ENCODE measurements at regions of chr1 and their contacts with region 1.

Region 1: GRCh38 chr1:147585640-147586383 is 44.5 kb downstream of the BCL9 start:
- DNase-seq: no peak
- ATAC-seq: no peak
- H3K4me3 ChIP-seq: no peak overlapping the region
- H3K27ac ChIP-seq: no peak overlapping the region
- H3K4me1 ChIP-seq: no peaks in the 10 kb centered on the region
- H3K27me3 ChIP-seq: no peaks in the 10 kb centered on the region
- CTCF ChIP-seq: no peak

Region 2: GRCh38 chr1:147551036-147551435 is 34.8 kb before region 1 on chr1:
- intact Hi-C with region 1: loop called in 1 of 3 experiments (anchors 5 kb)
- DNase-seq: no peak
- ATAC-seq: no peak
- H3K4me3 ChIP-seq: no peak overlapping the region
- H3K27ac ChIP-seq: no peak overlapping the region
- H3K4me1 ChIP-seq: peaks cover 0 to 10% (median 0%) of the 10 kb centered on the region in 3 donors
- H3K27me3 ChIP-seq: no peaks in the 10 kb centered on the region
- CTCF ChIP-seq: no peak

Region 3: DNA sequence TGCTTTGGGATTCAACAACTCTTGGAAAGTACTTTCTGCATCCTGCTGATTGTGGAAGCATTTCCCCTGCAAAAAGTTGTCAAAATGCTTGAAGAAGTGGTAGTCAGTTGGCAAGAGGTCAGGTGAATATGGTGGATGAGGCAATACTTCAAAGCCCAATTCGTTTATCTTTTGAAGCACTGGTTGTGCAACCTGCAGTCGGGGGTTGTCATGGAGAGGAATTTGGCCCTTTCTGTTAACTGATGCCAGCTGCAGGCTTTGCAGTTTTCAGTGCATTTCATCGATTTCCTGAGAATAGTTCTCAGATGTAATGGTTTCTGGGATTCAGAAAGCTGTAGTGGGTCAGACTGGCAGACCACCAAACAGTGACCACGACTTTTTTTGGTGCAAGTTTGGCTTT is 222.2 kb after region 1 on chr1:
- intact Hi-C with region 1: no loop called
- DNase-seq: no peak
- ATAC-seq: no peak
- H3K4me3 ChIP-seq: no peak overlapping the region
- H3K27ac ChIP-seq: no peak overlapping the region
- H3K4me1 ChIP-seq: no peaks in the 10 kb centered on the region
- H3K27me3 ChIP-seq: no peaks in the 10 kb centered on the region
- CTCF ChIP-seq: no peak

Region 4: GRCh38 chr1:147868953-147869352 is 283.1 kb after region 1 on chr1:
- intact Hi-C with region 1: no loop called
- DNase-seq: no peak
- ATAC-seq: peak in 1 of 4 donors; percentile 29
- H3K4me3 ChIP-seq: no peak overlapping the region
- H3K27ac ChIP-seq: no peak overlapping the region
- H3K4me1 ChIP-seq: no peaks in the 10 kb centered on the region
- H3K27me3 ChIP-seq: no peaks in the 10 kb centered on the region
- CTCF ChIP-seq: no peak